ENCODE measurements at regions of chr20 and their contacts with region 1.

Region 1: DNA sequence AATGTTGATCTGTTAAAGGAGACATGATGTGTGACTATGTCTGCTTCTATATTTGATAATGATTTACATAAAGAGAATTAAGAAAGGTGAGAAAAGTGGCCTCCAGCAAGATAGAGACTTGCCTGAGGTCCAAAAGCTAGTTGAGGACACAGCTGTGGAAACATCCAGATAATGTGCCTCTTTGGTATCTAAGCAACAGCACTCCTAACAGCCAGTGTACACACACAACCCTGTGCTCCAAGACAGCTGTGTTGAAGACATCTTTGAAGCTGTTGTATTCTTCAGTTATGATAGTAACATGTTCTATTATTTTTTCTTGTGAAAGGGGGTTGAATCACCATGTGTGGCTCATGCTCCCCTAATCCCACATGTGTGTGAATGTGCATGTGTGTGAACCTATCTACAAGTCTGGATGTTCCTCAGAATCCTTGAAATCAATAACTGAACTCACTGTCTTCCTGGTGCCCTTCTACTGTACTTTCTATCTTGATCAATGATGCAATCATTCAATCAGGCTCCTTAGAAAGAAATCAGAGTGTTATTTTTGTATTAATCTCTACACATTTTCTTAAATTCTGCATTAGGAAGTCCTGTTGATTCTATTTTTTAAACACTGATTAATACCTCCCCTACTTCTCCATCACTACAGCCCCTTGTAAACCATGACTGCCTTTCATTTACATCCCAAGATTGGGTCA is 116.7 kb upstream of the SSTR4 start:
- DNase-seq: no peak
- ATAC-seq: no peak
- H3K4me3 ChIP-seq: no peak overlapping the region
- H3K27ac ChIP-seq: no peak overlapping the region; a peak in 1 of 6 replicates
- H3K4me1 ChIP-seq: peaks cover 32% of the 10 kb centered on the region
- CTCF ChIP-seq: no peak
- EP300 ChIP-seq: no peak
- POLR2A ChIP-seq: no peak
- RAD21 ChIP-seq: no peak

Region 2: GRCh38 chr20:22904386-22904785 is 14.0 kb before region 1 on chr20:
- CTCF ChIA-PET with region 1: interaction called, 10 read pairs
- POLR2A ChIA-PET with region 1: no interaction called
- DNase-seq: no peak
- ATAC-seq: no peak
- H3K4me3 ChIP-seq: no peak overlapping the region
- H3K27ac ChIP-seq: no peak overlapping the region
- H3K4me1 ChIP-seq: no peaks in the 10 kb centered on the region
- CTCF ChIP-seq: no peak
- EP300 ChIP-seq: no peak
- POLR2A ChIP-seq: no peak
- RAD21 ChIP-seq: no peak

Region 3: DNA sequence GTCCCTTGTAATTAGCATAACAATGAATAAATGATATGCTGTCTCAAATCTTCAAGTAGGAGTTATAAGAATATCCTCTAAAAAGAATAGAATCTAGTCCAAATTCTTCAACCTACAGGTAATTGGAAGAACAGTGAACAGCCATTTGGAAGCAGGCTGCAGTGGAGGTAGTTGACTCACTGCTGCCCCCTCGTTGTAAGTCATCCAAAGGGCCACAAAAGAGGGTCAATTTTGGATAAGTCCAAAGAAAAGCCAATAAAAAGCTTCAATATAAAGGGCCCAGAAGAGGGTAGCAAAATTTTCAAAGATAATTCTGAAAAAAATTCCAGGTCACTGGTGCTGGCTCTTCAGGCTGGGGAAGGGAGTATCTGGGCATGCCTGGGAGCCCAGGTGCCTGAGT is 55.9 kb after region 1 on chr20:
- CTCF ChIA-PET with region 1: no interaction called
- POLR2A ChIA-PET with region 1: no interaction called
- DNase-seq: peak in 1 of 2 experiments; percentile 60
- ATAC-seq: peak in 1 of 2 experiments; percentile 71; a peak in 3 of 6 replicates
- H3K4me3 ChIP-seq: no peak overlapping the region
- H3K27ac ChIP-seq: peak overlapping the region; percentile 7 to 14; a peak in 3 of 6 replicates
- H3K4me1 ChIP-seq: 0 out of 3 replicates have a peak, but pooled peaks cover 3% of the 10 kb centered on the region
- CTCF ChIP-seq: peak; percentile 40
- EP300 ChIP-seq: no peak
- POLR2A ChIP-seq: no peak
- RAD21 ChIP-seq: peak; percentile 51 to 73; a peak in 4 of 5 replicates